Activated CD4-positive, alpha-beta T cell treated with anti-CD3 and anti-CD28 coated beads, Interleukin-2, amount 10 ng/mL, durations not matched to agents 24 days and 14 days (primary cell): ENCODE measurements at regions of chr12 and their contacts with region 1.

Region 1: GRCh38 chr12:109880016-109880931 is at the start of gene GLTP:
- DNase-seq: peak; percentile 98
- H3K4me3 Mint-ChIP-seq: peak within 1 kb of the TSS; percentile 92
- H3K27ac Mint-ChIP-seq: peak within 1 kb of the TSS; percentile 86
- H3K4me1 Mint-ChIP-seq: peaks cover 32% of the 10 kb centered on the region
- H3K27me3 Mint-ChIP-seq: peaks cover 21% of the 10 kb centered on the region
- total RNA-seq, gene GLTP: 27.9 and 28.2 TPM in 2 replicates

Region 2: DNA sequence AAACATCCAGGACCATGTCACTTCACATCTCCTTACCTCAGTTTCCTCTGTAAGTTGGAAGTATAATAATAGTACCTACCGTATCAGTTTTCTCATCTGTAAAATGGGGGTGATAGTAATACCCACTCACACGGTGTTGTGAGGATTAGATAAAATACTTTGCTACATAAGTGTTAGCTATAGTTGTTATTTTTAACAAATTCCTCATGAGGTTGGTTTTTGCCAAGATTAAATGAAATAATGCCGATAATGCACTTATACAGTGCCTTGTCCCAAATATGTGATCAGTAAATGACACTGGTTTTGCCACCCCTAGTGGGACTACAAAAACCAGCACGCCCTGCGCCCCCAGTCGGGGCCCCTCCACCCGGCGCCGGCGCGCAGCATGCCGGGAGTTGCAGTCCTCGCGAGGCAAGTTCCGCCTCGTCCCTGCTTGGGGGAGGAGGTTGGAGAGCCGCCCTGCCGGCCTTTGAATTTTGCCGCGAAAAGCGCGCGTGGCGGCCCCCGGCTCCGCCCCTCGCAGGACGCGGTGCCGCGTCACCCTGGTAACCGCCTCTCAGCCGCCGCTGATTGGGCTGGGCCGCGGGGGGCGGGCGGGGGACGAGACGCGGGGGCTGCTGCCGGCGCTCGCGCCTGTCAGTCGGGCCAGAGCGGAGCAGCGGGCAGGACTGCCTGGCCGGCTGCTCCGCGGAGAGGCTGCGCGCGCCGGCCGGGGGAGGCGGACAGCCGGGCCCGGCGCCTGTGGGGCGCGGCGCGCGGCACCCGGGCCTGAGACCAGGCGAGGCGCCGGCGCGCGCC is 166.9 kb before region 1 on chr12 and contains the start of gene FAM222A:
- intact Hi-C with region 1: loop called (anchors 1 kb)
- DNase-seq: peak; percentile 99
- H3K4me3 Mint-ChIP-seq: peak within 1 kb of the TSS; percentile 67
- H3K27ac Mint-ChIP-seq: no peak within 1 kb of the TSS
- H3K4me1 Mint-ChIP-seq: no peaks in the 10 kb centered on the region
- H3K27me3 Mint-ChIP-seq: peaks cover 53% of the 10 kb centered on the region
- total RNA-seq, gene FAM222A: 1.3 and 1.5 TPM in 2 replicates

Region 3: DNA sequence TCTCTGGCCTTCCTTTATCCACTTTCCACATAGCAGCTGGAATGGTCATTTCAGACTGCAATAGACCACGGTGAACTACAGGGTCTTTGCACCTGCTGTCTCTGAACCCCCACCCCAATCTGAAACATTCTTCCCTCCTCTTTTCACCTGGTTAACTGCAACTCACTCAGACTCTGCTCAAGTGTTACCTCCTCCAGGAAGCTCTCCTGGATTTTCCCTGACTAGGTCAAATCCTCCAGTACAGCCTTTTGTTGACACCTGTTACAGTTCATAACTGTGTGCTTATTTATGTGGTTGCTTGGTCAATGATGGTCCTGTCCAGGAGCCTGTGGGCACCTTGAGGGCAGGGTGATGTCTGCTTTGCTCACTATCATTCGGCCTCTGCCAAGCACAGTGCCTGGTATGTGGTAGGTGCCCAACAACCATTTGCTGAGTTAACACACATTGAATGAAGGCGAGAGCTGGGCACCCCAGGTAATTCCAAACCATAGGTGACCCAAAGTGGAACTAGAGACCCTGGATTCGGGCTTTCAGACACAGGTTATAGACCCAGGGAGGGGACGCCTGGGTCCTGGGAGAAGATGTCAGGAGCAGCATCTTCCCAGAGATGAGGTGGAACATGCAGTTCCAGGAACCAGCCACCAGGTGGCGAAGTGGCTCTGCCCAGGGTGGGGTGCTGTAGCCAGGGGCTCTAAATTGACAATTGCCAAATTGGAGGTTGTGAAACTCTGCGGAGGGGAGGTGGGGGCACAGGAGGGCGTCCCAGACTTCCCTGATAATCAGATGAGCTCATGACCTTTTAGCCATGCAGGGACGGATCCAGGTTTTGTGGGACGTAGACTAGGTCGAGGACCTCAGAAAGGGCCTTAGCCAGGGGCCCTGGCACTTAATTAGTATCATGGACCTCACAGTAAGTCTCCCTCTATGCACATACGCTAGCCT is 75.2 kb before region 1 on chr12:
- intact Hi-C with region 1: loop called (anchors 1 kb)
- DNase-seq: peak; percentile 90
- H3K4me3 Mint-ChIP-seq: no peak overlapping the region
- H3K27ac Mint-ChIP-seq: no peak overlapping the region
- H3K4me1 Mint-ChIP-seq: peaks cover 2% of the 10 kb centered on the region
- H3K27me3 Mint-ChIP-seq: no peaks in the 10 kb centered on the region

Region 4: DNA sequence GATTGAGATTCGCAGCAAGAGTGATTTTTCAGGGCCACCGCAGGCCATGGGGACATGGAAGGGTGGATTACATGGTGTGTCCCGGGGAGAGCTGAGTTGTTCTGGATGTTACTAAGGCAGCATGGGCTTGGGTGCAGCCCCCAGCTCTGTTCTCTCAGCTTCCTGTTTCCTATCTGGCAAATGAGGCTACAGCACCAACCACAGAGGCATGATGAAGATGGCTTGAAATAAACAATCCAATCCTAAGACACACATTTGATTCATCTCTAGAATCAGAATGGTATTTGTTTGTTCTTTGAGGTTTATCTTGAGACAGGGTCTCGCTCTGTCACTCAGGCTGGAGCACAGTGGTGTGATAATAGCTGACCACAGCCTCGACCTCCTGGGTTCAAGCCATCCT is 21.5 kb before region 1 on chr12:
- intact Hi-C with region 1: loop called (anchors 1 kb)
- DNase-seq: no peak
- H3K4me3 Mint-ChIP-seq: no peak overlapping the region
- H3K27ac Mint-ChIP-seq: no peak overlapping the region
- H3K4me1 Mint-ChIP-seq: peaks cover 5% of the 10 kb centered on the region
- H3K27me3 Mint-ChIP-seq: no peaks in the 10 kb centered on the region

Region 5: GRCh38 chr12:109899783-109900751 is 19.8 kb after region 1 on chr12 and contains the start of gene TCHP:
- intact Hi-C with region 1: loop called (anchors 2 kb)
- DNase-seq: peak; percentile 93
- H3K4me3 Mint-ChIP-seq: peak within 1 kb of the TSS; percentile 90
- H3K27ac Mint-ChIP-seq: peak within 1 kb of the TSS; percentile 98
- H3K4me1 Mint-ChIP-seq: peaks cover 17% of the 10 kb centered on the region
- H3K27me3 Mint-ChIP-seq: no peaks in the 10 kb centered on the region
- total RNA-seq, gene TCHP: 30.9 and 34.0 TPM in 2 replicates

Region 6: DNA sequence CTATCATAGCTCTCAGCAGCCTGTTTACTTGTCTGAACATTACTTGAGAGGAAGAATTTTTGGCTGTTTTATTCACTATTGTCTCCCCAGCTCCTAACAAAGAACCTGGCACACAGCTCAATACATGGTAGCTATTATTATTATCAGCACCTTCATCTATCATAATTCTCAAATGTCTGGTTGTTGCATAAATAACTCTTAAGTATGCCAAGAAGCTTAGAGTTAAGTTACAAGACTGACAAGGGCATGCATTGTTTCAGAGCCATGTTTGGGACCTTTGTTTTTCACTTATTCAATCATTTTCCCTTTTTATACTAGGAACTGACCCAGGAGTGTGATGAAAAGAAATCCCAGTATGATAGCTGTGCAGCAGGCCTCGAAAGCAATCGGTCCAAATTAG is 323.3 kb after region 1 on chr12:
- intact Hi-C with region 1: no loop called
- DNase-seq: no peak
- H3K4me3 Mint-ChIP-seq: no peak overlapping the region
- H3K27ac Mint-ChIP-seq: no peak overlapping the region
- H3K4me1 Mint-ChIP-seq: peaks cover 8% of the 10 kb centered on the region
- H3K27me3 Mint-ChIP-seq: no peaks in the 10 kb centered on the region